Activated CD8-positive, alpha-beta T cell treated with anti-CD3 and anti-CD28 coated beads for 36 hours (primary cell): ENCODE measurements at regions of chr2 and their contacts with region 1.

Region 1: GRCh38 chr2:12931186-12931844 is 214.6 kb downstream of the TRIB2 start:
- DNase-seq: no peak
- ATAC-seq: peak; percentile 56
- H3K4me3 Mint-ChIP-seq: no peak overlapping the region
- H3K27ac Mint-ChIP-seq: no peak overlapping the region
- H3K4me1 Mint-ChIP-seq: peaks cover 4% of the 10 kb centered on the region
- H3K27me3 Mint-ChIP-seq: peaks cover 11% of the 10 kb centered on the region
- CTCF ChIP-seq: peak; percentile 78

Region 2: DNA sequence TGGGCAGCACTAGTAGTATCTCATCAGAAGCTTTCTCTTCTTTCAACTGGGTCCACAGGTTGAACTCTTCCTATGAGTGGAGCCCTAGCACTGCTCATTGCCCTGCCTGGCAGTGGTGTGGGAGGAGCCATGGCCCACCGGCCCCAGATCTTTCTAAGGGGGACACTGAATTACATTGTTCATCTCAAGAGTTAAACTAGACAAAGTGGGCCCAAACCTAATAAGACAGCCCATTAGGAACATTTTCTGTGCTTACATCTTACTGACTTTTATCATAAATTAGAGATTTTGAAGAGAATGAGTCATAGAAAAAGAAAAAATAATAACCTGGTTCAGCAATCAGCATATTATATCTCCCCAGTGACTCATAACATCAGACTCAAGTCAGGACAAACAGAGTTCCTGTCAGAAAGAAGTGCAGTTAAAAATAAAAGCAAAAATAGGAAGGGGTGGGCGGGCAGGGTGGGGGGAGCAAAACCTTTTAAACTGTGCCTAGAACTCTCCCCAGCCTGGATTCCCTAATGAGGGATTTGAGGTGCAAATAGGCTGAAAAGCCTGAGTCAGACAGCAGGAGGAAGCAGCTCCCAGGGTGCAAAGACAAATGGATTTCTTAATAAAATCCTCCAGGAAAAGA is 376.2 kb before region 1 on chr2:
- CTCF ChIA-PET with region 1: interaction called, 9 read pairs
- POLR2A ChIA-PET with region 1: no interaction called
- intact Hi-C with region 1: loop called (anchors 5 kb)
- DNase-seq: peak; percentile 59
- ATAC-seq: peak; percentile 89
- H3K4me3 Mint-ChIP-seq: peak overlapping the region; percentile 4
- H3K27ac Mint-ChIP-seq: peak overlapping the region; percentile 77
- H3K4me1 Mint-ChIP-seq: peaks cover 34% of the 10 kb centered on the region
- H3K27me3 Mint-ChIP-seq: no peaks in the 10 kb centered on the region
- CTCF ChIP-seq: no peak

Region 3: DNA sequence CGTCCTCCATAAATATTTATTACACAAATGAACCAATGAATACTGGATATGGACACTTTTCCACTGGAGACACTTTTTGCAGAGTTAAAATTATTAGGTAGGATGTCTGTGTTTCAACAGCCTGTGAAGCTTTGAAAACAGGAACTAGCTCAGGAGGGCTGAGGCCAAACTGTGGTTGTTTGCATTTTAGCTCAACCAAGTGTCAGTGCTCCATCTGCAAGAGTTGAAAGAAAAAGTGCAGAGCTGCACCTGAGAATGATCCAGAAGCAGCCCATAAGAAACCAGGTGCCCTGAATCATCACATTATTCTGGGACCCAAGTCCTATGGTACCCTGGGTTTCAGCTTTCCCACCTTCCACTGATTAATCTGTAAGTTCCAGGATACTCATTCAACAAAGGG is 34.1 kb before region 1 on chr2:
- CTCF ChIA-PET with region 1: interaction called, 19 read pairs
- POLR2A ChIA-PET with region 1: no interaction called
- intact Hi-C with region 1: no loop called
- DNase-seq: no peak
- ATAC-seq: no peak
- H3K4me3 Mint-ChIP-seq: no peak overlapping the region
- H3K27ac Mint-ChIP-seq: no peak overlapping the region
- H3K4me1 Mint-ChIP-seq: peaks cover 19% of the 10 kb centered on the region
- H3K27me3 Mint-ChIP-seq: no peaks in the 10 kb centered on the region
- CTCF ChIP-seq: no peak

Region 4: GRCh38 chr2:12948961-12949353 is 17.6 kb after region 1 on chr2:
- CTCF ChIA-PET with region 1: interaction called, 10 read pairs
- POLR2A ChIA-PET with region 1: interaction called, 3 read pairs
- intact Hi-C with region 1: no loop called
- DNase-seq: peak; percentile 33
- ATAC-seq: peak; percentile 81
- H3K4me3 Mint-ChIP-seq: no peak overlapping the region
- H3K27ac Mint-ChIP-seq: no peak overlapping the region
- H3K4me1 Mint-ChIP-seq: peaks cover 6% of the 10 kb centered on the region
- H3K27me3 Mint-ChIP-seq: peaks cover 27% of the 10 kb centered on the region
- CTCF ChIP-seq: no peak